ENCODE measurements at regions of chr12 and their contacts with region 1.

Region 1: GRCh38 chr12:68158432-68158831 is 1.1 kb downstream of the IFNG start:
- DNase-seq: no peak
- H3K4me3 Mint-ChIP-seq: peak overlapping the region; percentile 3
- H3K27ac Mint-ChIP-seq: peak overlapping the region; percentile 25
- H3K4me1 Mint-ChIP-seq: peaks cover 28% of the 10 kb centered on the region
- H3K27me3 Mint-ChIP-seq: no peaks in the 10 kb centered on the region

Region 2: GRCh38 chr12:67355578-67356379 is 802.7 kb before region 1 on chr12:
- CTCF ChIA-PET with region 1: no interaction called
- intact Hi-C with region 1: loop called (anchors 10 kb)
- DNase-seq: peak; percentile 17
- H3K4me3 Mint-ChIP-seq: no peak overlapping the region
- H3K27ac Mint-ChIP-seq: no peak overlapping the region
- H3K4me1 Mint-ChIP-seq: peaks cover 25% of the 10 kb centered on the region
- H3K27me3 Mint-ChIP-seq: no peaks in the 10 kb centered on the region

Region 3: DNA sequence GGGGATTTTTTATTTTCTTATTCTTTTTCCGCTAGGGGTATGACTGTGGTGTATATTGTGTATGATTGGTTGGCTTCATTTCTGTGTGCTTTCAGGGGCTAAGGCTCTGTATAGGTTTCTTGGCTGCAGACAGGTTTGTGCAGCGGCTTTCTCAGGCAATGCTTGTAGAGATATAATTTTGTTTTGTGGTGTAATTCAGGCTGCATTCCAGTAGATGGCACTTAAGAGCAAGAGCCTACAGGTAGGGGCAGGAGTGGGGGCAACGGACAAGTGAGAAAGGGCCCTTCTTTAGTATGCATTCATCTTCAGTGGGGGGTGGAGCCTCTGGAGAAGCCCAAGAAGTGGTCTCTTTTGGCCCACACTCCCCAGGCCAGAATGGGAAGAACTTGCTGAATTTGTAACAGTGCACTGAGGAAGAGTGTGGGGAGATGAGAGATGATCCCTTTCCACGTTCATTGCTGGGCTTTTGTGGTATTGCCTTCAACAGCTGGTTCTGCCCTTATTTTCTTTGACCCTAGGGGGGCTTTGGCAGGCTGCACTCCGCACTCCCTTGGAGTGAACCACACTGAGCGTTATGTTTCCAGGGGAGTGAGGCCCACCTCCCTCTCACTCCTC is 90.6 kb before region 1 on chr12:
- CTCF ChIA-PET with region 1: interaction called, 8 read pairs
- intact Hi-C with region 1: loop called (anchors 1 kb)
- DNase-seq: no peak
- H3K4me3 Mint-ChIP-seq: no peak overlapping the region
- H3K27ac Mint-ChIP-seq: no peak overlapping the region
- H3K4me1 Mint-ChIP-seq: peaks cover 5% of the 10 kb centered on the region
- H3K27me3 Mint-ChIP-seq: no peaks in the 10 kb centered on the region

Region 4: DNA sequence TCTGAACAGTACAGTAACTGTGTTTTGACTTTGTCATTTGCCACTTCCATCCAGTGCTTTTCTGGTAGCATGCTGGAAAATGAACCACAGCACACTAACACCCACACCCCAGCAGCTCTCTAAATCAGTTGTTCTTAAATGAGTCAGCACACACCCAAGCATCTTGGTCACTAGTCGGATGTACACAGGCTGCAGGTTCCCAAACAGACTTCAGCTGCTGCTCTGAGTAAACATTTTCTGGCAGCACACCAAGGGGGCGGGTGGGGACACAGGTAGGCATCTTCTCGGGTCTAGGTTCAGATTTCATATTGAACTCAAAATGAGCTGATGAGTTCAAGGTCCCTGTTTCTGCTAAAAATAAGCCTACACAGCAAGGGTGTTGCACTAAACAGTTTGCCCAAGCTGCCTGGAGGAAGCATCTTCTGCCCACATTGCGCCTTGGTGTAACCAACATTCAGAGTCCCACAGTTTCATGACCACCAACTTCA is 38.7 kb before region 1 on chr12:
- CTCF ChIA-PET with region 1: interaction called, 88 read pairs
- intact Hi-C with region 1: loop called (anchors 1 kb)
- DNase-seq: peak; percentile 83
- H3K4me3 Mint-ChIP-seq: no peak overlapping the region
- H3K27ac Mint-ChIP-seq: peak overlapping the region; percentile 43
- H3K4me1 Mint-ChIP-seq: peaks cover 33% of the 10 kb centered on the region
- H3K27me3 Mint-ChIP-seq: no peaks in the 10 kb centered on the region

Region 5: GRCh38 chr12:68169213-68169889 is 10.9 kb after region 1 on chr12:
- CTCF ChIA-PET with region 1: interaction called, 12 read pairs
- intact Hi-C with region 1: no loop called
- DNase-seq: peak; percentile 28
- H3K4me3 Mint-ChIP-seq: no peak overlapping the region
- H3K27ac Mint-ChIP-seq: peak overlapping the region; percentile 82
- H3K4me1 Mint-ChIP-seq: peaks cover 39% of the 10 kb centered on the region
- H3K27me3 Mint-ChIP-seq: no peaks in the 10 kb centered on the region

Region 6: DNA sequence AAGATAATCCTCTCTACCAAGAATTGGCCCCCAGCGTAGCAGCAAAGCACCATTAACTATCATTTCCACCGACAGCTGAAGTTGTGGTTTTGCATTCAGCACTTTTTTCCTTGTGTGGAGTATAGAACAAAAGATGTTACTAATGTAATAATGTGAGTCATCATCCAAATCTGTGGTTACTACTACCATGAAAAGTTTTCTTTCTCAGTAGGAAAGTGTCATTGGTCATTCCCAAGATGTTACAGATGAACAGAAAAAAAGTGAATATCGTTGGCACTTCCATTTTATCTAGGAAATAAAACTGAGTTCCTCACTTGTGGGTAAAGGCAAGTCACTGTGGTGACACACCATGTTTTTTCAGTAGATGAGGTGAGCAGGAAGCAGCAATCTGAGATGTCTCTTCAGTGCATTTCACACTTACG is 31.4 kb after region 1 on chr12:
- CTCF ChIA-PET with region 1: interaction called, 11 read pairs
- intact Hi-C with region 1: loop called (anchors 1 kb)
- DNase-seq: peak; percentile 65
- H3K4me3 Mint-ChIP-seq: peak overlapping the region; percentile 9
- H3K27ac Mint-ChIP-seq: peak overlapping the region; percentile 61
- H3K4me1 Mint-ChIP-seq: peaks cover 26% of the 10 kb centered on the region
- H3K27me3 Mint-ChIP-seq: no peaks in the 10 kb centered on the region